CD8-positive, alpha-beta T cell (primary cell): ENCODE measurements at regions of chr7 and their contacts with region 1.

Region 1: GRCh38 chr7:38147005-38147404 is 31.0 kb upstream of the STARD3NL start:
- DNase-seq: no peak
- ATAC-seq: no peak
- H3K4me3 ChIP-seq: no peak overlapping the region
- H3K4me3 Mint-ChIP-seq: no peak overlapping the region
- H3K27ac ChIP-seq: no peak overlapping the region
- H3K27ac Mint-ChIP-seq: no peak overlapping the region
- H3K4me1 ChIP-seq: no peaks in the 10 kb centered on the region
- H3K4me1 Mint-ChIP-seq: no peaks in the 10 kb centered on the region
- H3K27me3 ChIP-seq: no peaks in the 10 kb centered on the region
- H3K27me3 Mint-ChIP-seq: peaks cover 2% of the 10 kb centered on the region
- CTCF ChIP-seq: no peak

Region 2: GRCh38 chr7:37960483-37960882 is 186.5 kb before region 1 on chr7:
- CTCF ChIA-PET with region 1: no interaction called
- POLR2A ChIA-PET with region 1: no interaction called
- intact Hi-C with region 1: loop called in 1 of 2 experiments (anchors 5 kb)
- DNase-seq: no peak
- ATAC-seq: no peak
- H3K4me3 ChIP-seq: no peak overlapping the region
- H3K4me3 Mint-ChIP-seq: no peak overlapping the region
- H3K27ac ChIP-seq: no peak overlapping the region
- H3K27ac Mint-ChIP-seq: no peak overlapping the region
- H3K4me1 ChIP-seq: no peaks in the 10 kb centered on the region
- H3K4me1 Mint-ChIP-seq: no peaks in the 10 kb centered on the region
- H3K27me3 ChIP-seq: no peaks in the 10 kb centered on the region
- H3K27me3 Mint-ChIP-seq: no peaks in the 10 kb centered on the region
- CTCF ChIP-seq: no peak